WTC11 (cell line): ENCODE measurements at regions of chr22 and their contacts with region 1.

Region 1: GRCh38 chr22:43263645-43264514 is 76.9 kb upstream of the TTLL12 start:
- DNase-seq: no peak
- ATAC-seq: no peak
- H3K4me3 Mint-ChIP-seq: no peak overlapping the region
- H3K27ac Mint-ChIP-seq: peak overlapping the region; percentile 5; the same call in 1 of the 2 replicates
- H3K4me1 Mint-ChIP-seq: peaks cover 7% of the 10 kb centered on the region; the same call in 1 of the 2 replicates
- H3K27me3 Mint-ChIP-seq: no peaks in the 10 kb centered on the region
- CTCF ChIP-seq: no peak

Region 2: DNA sequence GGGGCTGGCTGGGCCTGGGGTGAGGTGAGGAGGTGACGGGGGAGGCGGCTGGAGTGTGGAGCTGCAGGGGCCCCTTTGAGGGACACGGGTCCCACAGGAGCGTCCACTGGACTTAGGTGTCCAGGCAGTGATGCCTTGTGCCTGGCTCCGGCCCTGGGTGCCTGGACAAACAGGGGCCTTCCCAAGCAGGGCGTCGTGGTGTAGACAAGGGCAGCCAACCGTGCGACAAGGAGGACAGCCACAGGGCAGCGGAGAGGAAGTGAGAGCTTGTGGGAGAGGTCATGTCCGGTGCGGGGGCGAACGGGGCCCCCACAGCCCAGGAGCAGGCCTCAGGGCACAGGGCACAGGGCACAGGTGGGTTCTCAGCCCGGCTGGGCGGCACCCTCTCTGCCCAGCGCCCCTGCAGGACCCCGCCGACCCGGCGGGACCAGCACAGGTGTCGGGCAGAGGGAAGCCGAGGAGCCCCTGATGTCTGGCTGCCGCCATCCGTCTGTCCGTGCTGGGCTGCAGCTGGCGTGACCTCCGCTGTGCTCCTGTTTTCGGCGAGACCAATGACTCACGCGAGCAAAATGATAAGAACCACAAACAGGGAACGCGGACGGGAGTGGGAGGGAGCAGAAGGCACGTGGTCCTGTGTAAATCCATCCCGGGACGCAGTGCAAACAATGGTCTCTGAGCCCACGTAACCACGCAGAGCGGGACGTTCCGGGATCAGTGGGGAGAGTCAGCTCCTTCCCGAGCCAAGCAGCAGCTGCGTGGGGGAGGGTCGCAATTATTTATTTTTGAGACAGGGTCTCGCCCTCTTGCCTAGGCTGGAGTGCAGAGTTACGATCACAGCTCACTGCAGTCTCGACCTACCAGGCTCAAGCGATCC is 494.1 kb before region 1 on chr22:
- CTCF ChIA-PET with region 1: no interaction called
- POLR2A ChIA-PET with region 1: no interaction called
- DNase-seq: no peak
- ATAC-seq: no peak
- H3K4me3 Mint-ChIP-seq: no peak overlapping the region
- H3K27ac Mint-ChIP-seq: no peak overlapping the region
- H3K4me1 Mint-ChIP-seq: peaks cover 11% of the 10 kb centered on the region
- H3K27me3 Mint-ChIP-seq: no peaks in the 10 kb centered on the region
- CTCF ChIP-seq: no peak

Region 3: GRCh38 chr22:43385770-43386641 is 122.1 kb after region 1 on chr22:
- CTCF ChIA-PET with region 1: interaction called, 10 read pairs
- POLR2A ChIA-PET with region 1: no interaction called
- DNase-seq: peak; percentile 84
- ATAC-seq: peak; percentile 73
- H3K4me3 Mint-ChIP-seq: no peak overlapping the region
- H3K27ac Mint-ChIP-seq: no peak overlapping the region
- H3K4me1 Mint-ChIP-seq: peaks cover 14% of the 10 kb centered on the region
- H3K27me3 Mint-ChIP-seq: peaks cover 28% of the 10 kb centered on the region
- CTCF ChIP-seq: peak; percentile 86